Dorsolateral prefrontal cortex (tissue), 120 donors: ENCODE measurements at regions of chr16 and their contacts with region 1.

Region 1: GRCh38 chr16:29117631-29118030 is 132.8 kb downstream of the LAT start:
- DNase-seq: no peak
- H3K4me3 ChIP-seq: no peak overlapping the region
- H3K27ac ChIP-seq: no peak overlapping the region
- H3K27me3 ChIP-seq: no peaks in the 10 kb centered on the region
- CTCF ChIP-seq: no peak

Region 2: DNA sequence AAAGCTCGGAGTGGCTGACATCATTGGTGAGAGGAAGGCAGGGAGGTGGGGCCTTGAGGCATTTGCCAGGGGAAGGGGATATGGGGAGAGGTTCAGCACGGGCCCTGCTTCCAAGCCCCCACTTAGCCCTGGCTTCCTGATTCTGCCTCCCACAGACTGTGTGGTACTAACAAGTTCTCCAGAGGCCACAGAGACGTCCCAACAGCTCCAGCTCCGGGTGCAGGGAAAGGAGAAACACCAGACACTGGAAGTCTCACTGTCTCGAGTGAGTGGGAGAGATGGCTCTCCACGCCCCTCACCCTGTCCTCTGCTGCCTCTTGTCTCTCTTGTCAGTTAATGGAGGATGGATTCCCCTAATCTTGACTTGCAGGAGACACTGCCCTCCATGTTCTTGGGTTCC is 158.8 kb before region 1 on chr16:
- intact Hi-C with region 1: no loop called
- DNase-seq: no peak
- H3K4me3 ChIP-seq: no peak overlapping the region
- H3K27ac ChIP-seq: no peak overlapping the region
- H3K27me3 ChIP-seq: no peaks in the 10 kb centered on the region
- CTCF ChIP-seq: no peak

Region 3: GRCh38 chr16:29023279-29024277 is 94.1 kb before region 1 on chr16:
- intact Hi-C with region 1: no loop called
- DNase-seq: peak in 1 of 10 donors; percentile 5
- H3K4me3 ChIP-seq: no peak overlapping the region
- H3K27ac ChIP-seq: no peak overlapping the region
- H3K27me3 ChIP-seq: peaks cover 0 to 8% (median 0%) of the 10 kb centered on the region in 45 donors
- CTCF ChIP-seq: no peak

Region 4: DNA sequence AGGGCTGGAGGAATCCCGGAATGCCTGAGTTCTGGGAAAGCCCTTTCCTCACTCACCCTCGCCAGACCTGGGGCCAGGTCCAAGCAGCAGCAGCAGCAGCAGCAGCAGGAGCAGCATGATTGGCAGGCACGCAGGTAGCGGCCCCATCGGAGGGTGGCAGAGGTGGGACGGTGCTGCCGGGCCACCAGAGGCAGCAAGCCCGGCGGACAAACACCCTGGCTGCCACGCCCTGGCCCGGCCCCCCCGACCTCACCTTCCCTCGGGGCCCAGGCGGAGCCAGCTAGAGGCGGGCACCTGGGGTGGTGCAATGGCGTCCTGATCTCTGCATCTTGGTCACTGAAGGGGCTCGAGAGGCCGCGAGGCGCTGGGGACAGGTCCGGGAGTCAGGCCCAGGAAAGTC is 10.3 kb before region 1 on chr16:
- intact Hi-C with region 1: no loop called
- DNase-seq: no peak
- H3K4me3 ChIP-seq: no peak overlapping the region
- H3K27ac ChIP-seq: no peak overlapping the region
- H3K27me3 ChIP-seq: no peaks in the 10 kb centered on the region
- CTCF ChIP-seq: no peak

Region 5: GRCh38 chr16:29154676-29155121 is 37.1 kb after region 1 on chr16:
- intact Hi-C with region 1: no loop called
- DNase-seq: no peak
- H3K4me3 ChIP-seq: no peak overlapping the region
- H3K27ac ChIP-seq: no peak overlapping the region
- H3K27me3 ChIP-seq: no peaks in the 10 kb centered on the region
- CTCF ChIP-seq: no peak

Region 6: DNA sequence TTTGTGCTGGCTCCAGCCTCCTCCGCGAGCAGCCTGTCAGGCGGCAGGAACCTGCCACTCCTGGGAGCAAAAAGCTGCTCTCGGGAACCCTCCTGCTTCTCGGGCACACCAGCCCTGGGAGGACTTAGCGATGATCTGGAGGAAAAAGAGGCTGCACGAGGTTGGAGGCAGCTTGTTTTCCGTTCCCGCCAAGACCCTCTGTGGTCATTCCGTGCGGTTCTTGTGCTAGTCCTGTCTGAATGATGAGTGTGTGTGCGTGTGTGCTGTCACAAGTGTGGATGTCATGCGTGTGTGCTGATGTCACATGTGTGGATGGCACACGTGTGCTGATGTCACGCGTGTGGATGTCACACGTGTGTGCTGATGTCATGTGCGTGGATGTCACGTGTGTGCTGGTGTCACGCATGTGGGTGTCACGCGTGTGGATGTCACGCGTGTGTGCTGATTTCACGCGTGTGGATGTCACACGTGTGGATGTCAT is 138.9 kb after region 1 on chr16:
- intact Hi-C with region 1: loop called in 1 of 2 experiments (anchors 5 kb)
- DNase-seq: peak in 1 of 10 donors; percentile 21
- H3K4me3 ChIP-seq: no peak overlapping the region
- H3K27ac ChIP-seq: peak overlapping the region in 1 of 59 donors; percentile 53
- H3K27me3 ChIP-seq: no peaks in the 10 kb centered on the region
- CTCF ChIP-seq: no peak